ENCODE measurements at regions of chr5 and their contacts with region 1.

Region 1: DNA sequence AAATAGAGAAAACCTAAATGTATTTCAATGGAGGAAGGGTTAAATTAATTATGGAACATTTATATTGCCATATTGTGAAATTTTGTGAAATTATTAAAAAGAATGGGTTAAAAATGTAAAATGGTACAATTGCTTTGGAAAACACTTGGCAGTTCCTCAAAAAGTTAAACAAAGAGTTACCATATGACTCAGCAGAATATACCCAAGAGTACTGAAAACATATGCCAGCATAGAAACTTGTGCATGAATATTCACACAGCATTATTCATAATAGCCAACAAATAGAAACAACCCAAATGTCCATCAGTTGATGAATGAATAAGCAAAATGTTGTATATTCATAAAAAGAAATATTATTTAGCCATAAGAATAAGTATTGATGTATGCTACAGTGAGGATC is 181.0 kb upstream of the MAST4 start:
- DNase-seq: no peak
- ATAC-seq: no peak
- H3K4me3 ChIP-seq: no peak overlapping the region
- H3K4me3 Mint-ChIP-seq: no peak overlapping the region
- H3K27ac ChIP-seq: no peak overlapping the region
- H3K27ac Mint-ChIP-seq: no peak overlapping the region
- H3K4me1 ChIP-seq: no peaks in the 10 kb centered on the region
- H3K4me1 Mint-ChIP-seq: no peaks in the 10 kb centered on the region
- H3K27me3 ChIP-seq: no peaks in the 10 kb centered on the region
- H3K27me3 Mint-ChIP-seq: no peaks in the 10 kb centered on the region
- CTCF ChIP-seq: no peak

Region 2: GRCh38 chr5:64869419-64869818 is 1545.8 kb before region 1 on chr5:
- CTCF ChIA-PET with region 1: no interaction called
- POLR2A ChIA-PET with region 1: no interaction called
- intact Hi-C with region 1: loop called in 1 of 2 experiments (anchors 5 kb)
- DNase-seq: no peak
- ATAC-seq: no peak
- H3K4me3 ChIP-seq: no peak overlapping the region
- H3K4me3 Mint-ChIP-seq: no peak overlapping the region
- H3K27ac ChIP-seq: no peak overlapping the region
- H3K27ac Mint-ChIP-seq: no peak overlapping the region
- H3K4me1 ChIP-seq: no peaks in the 10 kb centered on the region
- H3K4me1 Mint-ChIP-seq: no peaks in the 10 kb centered on the region
- H3K27me3 ChIP-seq: no peaks in the 10 kb centered on the region
- H3K27me3 Mint-ChIP-seq: no peaks in the 10 kb centered on the region
- CTCF ChIP-seq: no peak

Region 3: GRCh38 chr5:66356011-66356565 is 59.1 kb before region 1 on chr5:
- CTCF ChIA-PET with region 1: no interaction called
- POLR2A ChIA-PET with region 1: no interaction called
- intact Hi-C with region 1: no loop called
- DNase-seq: no peak
- ATAC-seq: no peak
- H3K4me3 ChIP-seq: no peak overlapping the region
- H3K4me3 Mint-ChIP-seq: no peak overlapping the region
- H3K27ac ChIP-seq: no peak overlapping the region
- H3K27ac Mint-ChIP-seq: no peak overlapping the region
- H3K4me1 ChIP-seq: no peaks in the 10 kb centered on the region
- H3K4me1 Mint-ChIP-seq: no peaks in the 10 kb centered on the region
- H3K27me3 ChIP-seq: no peaks in the 10 kb centered on the region
- H3K27me3 Mint-ChIP-seq: peaks cover 7% of the 10 kb centered on the region
- CTCF ChIP-seq: no peak

Region 4: DNA sequence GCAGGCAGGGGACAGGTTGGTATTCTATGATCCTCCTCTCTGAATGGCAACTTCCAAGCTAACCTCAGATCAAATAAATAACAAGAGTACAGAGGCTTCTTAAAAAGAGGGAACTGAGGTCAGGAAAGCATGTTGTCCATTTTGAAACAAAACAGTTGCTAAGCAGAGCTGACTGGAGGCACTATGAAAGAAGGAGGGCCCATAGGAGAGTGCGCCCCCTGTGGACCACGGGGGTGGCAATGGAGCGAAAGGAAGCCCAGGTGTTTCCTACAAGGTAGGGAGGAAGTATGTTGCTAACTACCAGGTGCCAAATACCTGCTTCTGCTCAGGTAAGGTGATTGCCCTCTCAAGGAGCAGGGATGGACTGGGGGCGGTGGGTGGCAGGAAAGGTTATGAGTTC is 79.2 kb after region 1 on chr5:
- CTCF ChIA-PET with region 1: no interaction called
- POLR2A ChIA-PET with region 1: no interaction called
- intact Hi-C with region 1: no loop called
- DNase-seq: no peak
- ATAC-seq: no peak
- H3K4me3 ChIP-seq: no peak overlapping the region
- H3K4me3 Mint-ChIP-seq: no peak overlapping the region
- H3K27ac ChIP-seq: no peak overlapping the region
- H3K27ac Mint-ChIP-seq: no peak overlapping the region
- H3K4me1 ChIP-seq: no peaks in the 10 kb centered on the region
- H3K4me1 Mint-ChIP-seq: no peaks in the 10 kb centered on the region
- H3K27me3 ChIP-seq: no peaks in the 10 kb centered on the region
- H3K27me3 Mint-ChIP-seq: peaks cover 5% of the 10 kb centered on the region
- CTCF ChIP-seq: no peak

Region 5: DNA sequence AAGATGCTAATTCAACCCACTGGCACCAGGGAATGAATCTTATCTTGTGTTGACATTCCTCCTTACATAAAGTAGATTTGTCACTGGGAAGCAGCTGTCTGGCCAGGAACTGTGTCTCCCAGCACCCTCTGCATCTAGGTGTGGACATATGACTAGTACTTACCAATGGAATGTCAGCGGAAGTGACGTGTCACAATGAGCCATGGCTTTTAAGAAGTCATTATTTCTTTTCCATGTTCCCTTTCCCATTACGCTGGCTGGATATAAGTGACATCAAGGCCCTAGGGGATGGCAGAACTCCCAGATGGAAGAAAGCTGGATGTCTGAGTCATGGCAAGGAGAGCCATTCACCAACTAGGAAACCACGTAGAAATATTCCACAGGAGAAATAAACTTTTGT is 96.3 kb after region 1 on chr5:
- CTCF ChIA-PET with region 1: no interaction called
- POLR2A ChIA-PET with region 1: no interaction called
- intact Hi-C with region 1: no loop called
- DNase-seq: no peak
- ATAC-seq: no peak
- H3K4me3 ChIP-seq: no peak overlapping the region
- H3K4me3 Mint-ChIP-seq: no peak overlapping the region
- H3K27ac ChIP-seq: no peak overlapping the region
- H3K27ac Mint-ChIP-seq: no peak overlapping the region
- H3K4me1 ChIP-seq: no peaks in the 10 kb centered on the region
- H3K4me1 Mint-ChIP-seq: no peaks in the 10 kb centered on the region
- H3K27me3 ChIP-seq: no peaks in the 10 kb centered on the region
- H3K27me3 Mint-ChIP-seq: peaks cover 3% of the 10 kb centered on the region
- CTCF ChIP-seq: no peak